ENCODE measurements at regions of chrX and their contacts with region 1.

Region 1: DNA sequence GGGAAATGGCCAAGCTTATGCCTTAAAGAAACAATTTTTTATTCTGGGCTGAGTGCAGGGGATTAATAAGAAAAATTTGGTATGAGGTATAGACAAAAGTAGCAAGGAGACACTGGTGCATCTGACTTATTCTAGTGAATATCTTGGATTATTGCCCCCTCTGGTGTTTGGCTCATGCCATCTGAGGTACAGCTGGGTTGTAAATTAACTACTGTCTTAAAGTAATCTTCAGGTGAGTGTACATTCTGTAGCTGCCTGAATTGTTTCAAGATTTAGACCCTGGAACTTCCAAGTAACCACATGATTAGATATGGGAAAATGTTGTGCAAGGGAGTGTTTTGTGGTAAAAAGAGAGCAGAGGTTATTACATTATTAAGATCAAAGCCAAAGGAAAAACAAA is 988.7 kb downstream of the FAM133A start:
- DNase-seq: peak; percentile 30 to 36
- H3K4me3 ChIP-seq: no peak overlapping the region
- H3K4me3 Mint-ChIP-seq: no peak overlapping the region
- H3K27ac Mint-ChIP-seq: no peak overlapping the region
- H3K4me1 ChIP-seq: no peaks in the 10 kb centered on the region
- H3K4me1 Mint-ChIP-seq: peaks cover 5% of the 10 kb centered on the region
- H3K27me3 ChIP-seq: no peaks in the 10 kb centered on the region
- H3K27me3 Mint-ChIP-seq: no peaks in the 10 kb centered on the region
- CTCF ChIP-seq: peak; percentile 17 to 37

Region 2: DNA sequence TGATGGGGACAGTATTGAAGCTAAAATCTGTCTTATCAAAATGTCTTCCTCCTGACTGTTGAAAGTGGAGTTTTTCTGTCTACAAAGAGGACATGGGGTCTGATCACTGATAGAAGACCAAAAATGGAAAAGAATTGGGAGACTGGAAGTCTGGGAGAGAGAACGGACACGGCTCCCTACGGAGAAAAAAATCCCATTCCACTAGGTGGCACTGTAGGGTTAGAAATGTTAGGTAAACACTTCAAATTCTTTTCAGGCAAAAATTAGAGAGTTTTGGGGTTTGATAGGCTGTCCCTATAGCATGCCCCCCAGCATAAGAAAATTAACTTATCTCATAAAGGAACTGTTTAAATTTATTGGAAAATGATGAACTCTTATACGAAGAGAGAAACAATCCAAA is 788.1 kb before region 1 on chrX:
- CTCF ChIA-PET with region 1: no interaction called
- POLR2A ChIA-PET with region 1: no interaction called
- intact Hi-C with region 1: loop called (anchors 1 kb)
- DNase-seq: peak in 1 of 2 experiments; percentile 39
- H3K4me3 ChIP-seq: no peak overlapping the region
- H3K4me3 Mint-ChIP-seq: no peak overlapping the region
- H3K27ac Mint-ChIP-seq: no peak overlapping the region
- H3K4me1 ChIP-seq: no peaks in the 10 kb centered on the region
- H3K4me1 Mint-ChIP-seq: no peaks in the 10 kb centered on the region
- H3K27me3 ChIP-seq: no peaks in the 10 kb centered on the region
- H3K27me3 Mint-ChIP-seq: no peaks in the 10 kb centered on the region
- CTCF ChIP-seq: peak; percentile 36 to 47

Region 3: DNA sequence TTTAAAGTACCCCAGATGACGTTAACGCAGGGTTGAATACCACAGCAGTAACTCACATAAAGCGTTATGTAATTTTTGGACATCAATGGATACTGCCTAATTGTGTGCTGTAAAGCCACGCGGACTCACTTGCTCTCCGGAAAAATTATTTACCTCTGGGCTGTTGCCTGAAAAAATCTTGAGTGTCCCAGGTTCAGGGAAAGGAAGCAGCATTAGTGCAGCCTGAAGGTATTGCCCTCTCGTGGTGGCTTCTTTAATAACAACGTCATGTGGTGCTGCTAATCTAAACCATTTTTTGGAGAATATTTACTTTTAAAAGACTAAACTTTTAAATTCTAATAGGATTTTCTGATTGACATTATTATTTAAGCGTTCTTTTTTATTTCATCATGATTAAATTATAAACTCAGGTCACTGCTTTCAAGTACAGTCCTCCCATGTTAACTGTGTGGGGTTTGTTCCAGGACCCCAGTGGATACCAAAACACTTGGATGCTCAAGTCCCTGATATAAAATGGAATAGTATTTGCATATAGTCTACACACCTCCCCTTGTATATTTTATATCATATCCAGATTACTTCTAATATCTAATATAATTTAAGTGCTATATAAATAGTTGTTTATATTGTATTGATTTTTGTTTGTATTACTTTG is 603.8 kb before region 1 on chrX:
- CTCF ChIA-PET with region 1: no interaction called
- POLR2A ChIA-PET with region 1: no interaction called
- intact Hi-C with region 1: loop called (anchors 5 kb)
- DNase-seq: peak in 1 of 2 experiments; percentile 11
- H3K4me3 ChIP-seq: no peak overlapping the region
- H3K4me3 Mint-ChIP-seq: no peak overlapping the region
- H3K27ac Mint-ChIP-seq: no peak overlapping the region
- H3K4me1 ChIP-seq: no peaks in the 10 kb centered on the region
- H3K4me1 Mint-ChIP-seq: no peaks in the 10 kb centered on the region
- H3K27me3 ChIP-seq: no peaks in the 10 kb centered on the region
- H3K27me3 Mint-ChIP-seq: no peaks in the 10 kb centered on the region
- CTCF ChIP-seq: peak; percentile 49 to 59

Region 4: GRCh38 chrX:94256396-94256795 is 406.3 kb before region 1 on chrX:
- CTCF ChIA-PET with region 1: no interaction called
- POLR2A ChIA-PET with region 1: no interaction called
- intact Hi-C with region 1: no loop called
- DNase-seq: no peak
- H3K4me3 ChIP-seq: no peak overlapping the region
- H3K4me3 Mint-ChIP-seq: no peak overlapping the region
- H3K27ac Mint-ChIP-seq: no peak overlapping the region
- H3K4me1 ChIP-seq: no peaks in the 10 kb centered on the region
- H3K4me1 Mint-ChIP-seq: peaks cover 7% of the 10 kb centered on the region
- H3K27me3 ChIP-seq: no peaks in the 10 kb centered on the region
- H3K27me3 Mint-ChIP-seq: no peaks in the 10 kb centered on the region
- CTCF ChIP-seq: no peak

Region 5: GRCh38 chrX:94329182-94329581 is 333.5 kb before region 1 on chrX:
- CTCF ChIA-PET with region 1: no interaction called
- POLR2A ChIA-PET with region 1: no interaction called
- intact Hi-C with region 1: loop called (anchors 5 kb)
- DNase-seq: no peak
- H3K4me3 ChIP-seq: no peak overlapping the region
- H3K4me3 Mint-ChIP-seq: no peak overlapping the region
- H3K27ac Mint-ChIP-seq: no peak overlapping the region
- H3K4me1 ChIP-seq: no peaks in the 10 kb centered on the region
- H3K4me1 Mint-ChIP-seq: no peaks in the 10 kb centered on the region
- H3K27me3 ChIP-seq: no peaks in the 10 kb centered on the region
- H3K27me3 Mint-ChIP-seq: no peaks in the 10 kb centered on the region
- CTCF ChIP-seq: no peak

Region 6: DNA sequence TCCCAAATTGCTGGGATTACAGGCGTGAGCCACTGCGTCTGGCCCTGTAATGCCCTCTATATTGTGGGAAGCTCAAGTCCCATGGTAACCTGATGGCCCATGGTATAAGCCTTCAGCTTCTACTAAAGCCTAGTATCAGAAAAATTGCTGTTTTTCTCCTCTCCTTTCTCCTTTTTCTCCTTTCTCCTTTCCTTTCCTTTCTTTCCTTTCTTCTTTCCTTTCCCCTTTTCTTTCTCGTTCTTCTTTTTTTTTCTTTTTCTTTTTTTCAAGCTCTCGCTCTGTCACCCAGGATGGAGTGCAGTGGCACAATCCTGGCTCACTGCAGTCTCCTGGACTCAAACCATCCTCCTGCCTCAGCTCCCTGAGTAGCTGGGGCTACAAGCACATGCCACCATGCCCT is 247.9 kb before region 1 on chrX:
- CTCF ChIA-PET with region 1: no interaction called
- POLR2A ChIA-PET with region 1: no interaction called
- intact Hi-C with region 1: loop called (anchors 10 kb)
- DNase-seq: no peak
- H3K4me3 ChIP-seq: no peak overlapping the region
- H3K4me3 Mint-ChIP-seq: no peak overlapping the region
- H3K27ac Mint-ChIP-seq: no peak overlapping the region
- H3K4me1 ChIP-seq: no peaks in the 10 kb centered on the region; the same call in 1 of the 2 replicates
- H3K4me1 Mint-ChIP-seq: peaks cover 13% of the 10 kb centered on the region
- H3K27me3 ChIP-seq: no peaks in the 10 kb centered on the region
- H3K27me3 Mint-ChIP-seq: no peaks in the 10 kb centered on the region
- CTCF ChIP-seq: no peak

Region 7: GRCh38 chrX:94850811-94851210 is 188.1 kb after region 1 on chrX:
- CTCF ChIA-PET with region 1: no interaction called
- POLR2A ChIA-PET with region 1: no interaction called
- intact Hi-C with region 1: no loop called
- DNase-seq: no peak
- H3K4me3 ChIP-seq: no peak overlapping the region
- H3K4me3 Mint-ChIP-seq: no peak overlapping the region
- H3K27ac Mint-ChIP-seq: no peak overlapping the region
- H3K4me1 ChIP-seq: no peaks in the 10 kb centered on the region
- H3K4me1 Mint-ChIP-seq: no peaks in the 10 kb centered on the region
- H3K27me3 ChIP-seq: no peaks in the 10 kb centered on the region
- H3K27me3 Mint-ChIP-seq: no peaks in the 10 kb centered on the region
- CTCF ChIP-seq: no peak